Panc1 (cell line): ENCODE measurements at regions of chr10 and their contacts with region 1.

Region 1: GRCh38 chr10:131975003-131975402 is 6.7 kb downstream of the BNIP3 start:
- DNase-seq: no peak
- ATAC-seq: no peak
- H3K4me3 ChIP-seq: no peak overlapping the region
- H3K27ac ChIP-seq: no peak overlapping the region
- H3K4me1 ChIP-seq: peaks cover 17% of the 10 kb centered on the region
- H3K27me3 ChIP-seq: no peaks in the 10 kb centered on the region
- CTCF ChIP-seq: no peak

Region 2: DNA sequence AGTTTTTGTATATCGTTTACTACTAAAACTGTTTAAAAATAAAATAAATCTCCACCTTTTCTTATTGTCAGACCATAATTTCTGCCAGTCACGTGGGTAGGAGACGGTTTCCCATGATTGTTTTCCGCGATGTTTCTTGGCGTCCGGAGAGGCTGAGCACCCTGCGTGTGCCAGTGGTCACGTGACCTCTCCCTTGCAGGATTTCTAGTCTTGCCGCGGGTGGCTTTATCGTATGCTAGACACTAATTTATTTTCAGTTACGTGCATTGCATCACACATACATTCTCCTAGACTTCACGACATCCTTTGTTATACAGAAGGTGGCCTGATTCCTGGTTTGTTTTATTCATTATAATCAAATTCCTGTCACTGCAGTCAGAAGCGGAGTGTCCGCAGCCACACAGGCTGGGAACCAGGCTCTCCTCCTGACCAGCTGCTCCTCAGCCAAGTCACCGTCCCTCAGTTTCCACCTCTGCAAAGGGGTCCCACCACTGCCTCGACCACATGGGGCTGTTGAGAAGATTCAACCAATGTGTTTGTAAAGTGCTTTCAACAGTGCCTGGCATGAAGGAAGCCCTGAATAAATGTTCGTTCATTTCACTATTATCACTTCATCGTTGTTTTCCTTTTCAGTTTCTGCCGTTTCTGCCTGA is 277.4 kb before region 1 on chr10:
- CTCF ChIA-PET with region 1: no interaction called
- POLR2A ChIA-PET with region 1: no interaction called
- in situ Hi-C with region 1: no loop called
- intact Hi-C with region 1: no loop called
- DNase-seq: no peak
- ATAC-seq: no peak
- H3K4me3 ChIP-seq: no peak overlapping the region
- H3K27ac ChIP-seq: no peak overlapping the region
- H3K4me1 ChIP-seq: no peaks in the 10 kb centered on the region
- H3K27me3 ChIP-seq: peaks cover 4% of the 10 kb centered on the region; the same call in 1 of the 2 replicates
- CTCF ChIP-seq: no peak

Region 3: DNA sequence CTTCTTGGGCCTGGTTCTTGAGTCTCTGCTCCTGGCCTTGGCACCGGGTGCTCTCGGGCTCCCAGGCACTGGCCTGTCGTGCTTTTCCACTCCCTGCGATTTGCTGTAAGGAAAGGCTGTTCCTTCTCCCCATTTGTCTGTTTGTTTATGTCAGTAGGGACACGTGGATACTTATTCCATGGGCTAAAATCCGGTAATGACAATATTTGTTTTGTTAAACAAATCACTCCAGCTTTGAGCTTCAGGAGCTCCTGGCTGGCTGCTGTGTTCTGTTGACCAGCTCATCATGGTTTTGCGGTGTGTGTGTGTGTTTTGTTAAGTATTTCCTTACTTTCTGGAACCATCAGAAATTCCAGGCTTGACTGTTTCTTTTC is 73.3 kb after region 1 on chr10:
- CTCF ChIA-PET with region 1: interaction called, 10 read pairs
- POLR2A ChIA-PET with region 1: no interaction called
- in situ Hi-C with region 1: no loop called
- intact Hi-C with region 1: no loop called
- DNase-seq: no peak
- ATAC-seq: no peak
- H3K4me3 ChIP-seq: no peak overlapping the region
- H3K27ac ChIP-seq: no peak overlapping the region
- H3K4me1 ChIP-seq: no peaks in the 10 kb centered on the region
- H3K27me3 ChIP-seq: peaks cover 6% of the 10 kb centered on the region
- CTCF ChIP-seq: no peak